ENCODE measurements at regions of chr5 and their contacts with region 1.

Region 1: DNA sequence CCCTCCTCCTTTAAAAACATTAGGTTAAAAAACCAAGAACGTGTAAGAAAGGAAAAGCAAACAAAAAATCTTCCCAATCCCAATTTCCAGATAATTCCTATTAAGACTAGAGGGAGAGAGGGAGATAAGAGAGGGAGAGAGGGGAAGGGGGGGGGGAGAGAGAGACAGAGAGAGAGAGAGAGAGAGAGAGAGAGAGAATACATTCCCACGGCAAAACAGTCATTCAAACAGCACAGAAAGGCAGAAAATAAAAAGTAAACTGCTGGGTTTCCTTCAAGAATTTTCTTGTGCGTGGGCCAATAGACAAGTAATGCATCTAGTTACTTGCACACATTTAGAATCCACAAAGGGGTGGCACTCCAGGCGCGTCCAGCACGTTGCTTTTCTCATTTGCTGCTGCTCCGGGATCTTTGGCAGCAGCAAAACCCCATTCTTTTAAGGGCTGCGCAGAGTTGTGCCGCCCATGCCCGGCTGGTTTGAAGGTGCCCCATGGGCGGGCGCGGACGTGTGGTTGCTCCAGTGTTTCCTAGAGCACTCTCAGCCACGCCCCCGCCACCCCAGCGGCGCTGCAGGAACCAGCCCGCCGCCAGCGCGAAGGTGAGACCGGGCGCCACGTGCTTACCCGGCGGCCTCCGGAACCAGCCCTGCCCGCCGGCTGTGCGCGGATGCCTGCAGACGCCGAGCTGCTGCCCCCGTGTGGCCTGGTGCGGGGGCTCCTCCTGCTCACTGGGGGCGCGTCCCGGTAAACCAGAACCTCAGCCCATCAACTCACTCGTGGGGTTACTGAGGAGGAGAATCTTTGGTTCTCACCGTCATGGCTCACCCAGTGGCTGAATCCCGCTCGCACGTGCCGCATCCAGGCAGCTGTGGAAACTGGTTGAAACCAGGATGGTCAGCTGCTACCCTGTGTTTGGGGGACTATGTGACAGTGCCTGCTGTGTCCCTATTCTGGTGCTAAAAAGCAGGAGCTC is 44.6 kb downstream of the STC2 start:
- DNase-seq: peak; percentile 92
- H3K4me3 Mint-ChIP-seq: peak overlapping the region; percentile 24
- H3K27ac Mint-ChIP-seq: no peak overlapping the region
- H3K4me1 Mint-ChIP-seq: no peaks in the 10 kb centered on the region
- H3K27me3 Mint-ChIP-seq: peaks cover 96% of the 10 kb centered on the region
- CTCF ChIP-seq: peak; percentile 72

Region 2: GRCh38 chr5:173165177-173166016 is 118.2 kb before region 1 on chr5:
- CTCF ChIA-PET with region 1: interaction called, 3 read pairs
- intact Hi-C with region 1: loop called (anchors 1 kb)
- DNase-seq: no peak
- H3K4me3 Mint-ChIP-seq: no peak overlapping the region
- H3K27ac Mint-ChIP-seq: no peak overlapping the region
- H3K4me1 Mint-ChIP-seq: no peaks in the 10 kb centered on the region
- H3K27me3 Mint-ChIP-seq: peaks cover 32% of the 10 kb centered on the region
- CTCF ChIP-seq: no peak